ENCODE measurements at regions of chr19 and their contacts with region 1.

Region 1: DNA sequence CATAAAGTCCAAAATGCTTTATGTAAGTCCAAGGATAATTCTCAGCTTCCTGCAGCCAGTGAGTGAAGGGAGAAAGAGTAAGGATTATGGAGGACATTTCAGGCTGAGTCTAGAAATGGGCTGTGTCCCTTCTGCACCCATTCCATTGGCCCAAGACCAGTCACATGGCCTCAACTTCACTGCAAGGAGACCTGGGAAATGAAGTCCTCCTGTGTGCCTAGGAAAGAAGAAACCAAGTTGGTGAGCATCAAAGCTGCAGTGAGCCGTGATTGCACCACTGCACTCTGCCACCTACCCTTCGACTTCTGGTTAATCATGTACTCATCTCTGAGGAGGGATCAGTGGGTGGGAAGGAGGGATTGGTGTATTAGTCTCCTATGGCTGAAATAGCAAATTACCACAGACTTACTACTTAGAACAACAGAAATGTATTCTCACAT is 3.6 kb upstream of the CD37 start:
- DNase-seq: no peak
- ATAC-seq: peak; percentile 44
- H3K4me3 Mint-ChIP-seq: peak overlapping the region; percentile 73
- H3K27ac Mint-ChIP-seq: peak overlapping the region; percentile 100
- H3K4me1 Mint-ChIP-seq: peaks cover 95% of the 10 kb centered on the region
- H3K27me3 Mint-ChIP-seq: no peaks in the 10 kb centered on the region
- CTCF ChIP-seq: no peak

Region 2: DNA sequence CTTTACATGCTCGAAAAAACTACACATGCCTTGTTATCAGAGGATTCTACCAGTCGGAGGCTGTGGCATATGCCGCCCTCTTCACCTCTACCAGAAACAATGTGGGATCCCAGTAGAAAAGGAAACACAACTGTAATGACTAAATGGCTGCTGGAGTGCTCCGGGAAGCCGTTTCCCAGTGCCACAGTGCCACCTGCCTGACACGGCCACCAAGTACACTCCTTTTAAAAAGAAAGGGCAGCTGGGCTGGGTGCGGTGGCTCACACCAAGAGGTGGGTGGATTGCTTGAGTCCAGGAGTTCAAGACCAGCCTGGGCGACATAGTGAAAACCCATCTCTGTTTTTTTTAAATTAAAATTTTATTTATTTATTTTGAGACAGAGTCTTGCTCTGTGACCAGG is 106.8 kb before region 1 on chr19:
- CTCF ChIA-PET with region 1: no interaction called
- POLR2A ChIA-PET with region 1: interaction called, 5 read pairs
- intact Hi-C with region 1: loop called (anchors 5 kb)
- DNase-seq: no peak
- ATAC-seq: peak; percentile 54
- H3K4me3 Mint-ChIP-seq: no peak overlapping the region
- H3K27ac Mint-ChIP-seq: no peak overlapping the region
- H3K4me1 Mint-ChIP-seq: peaks cover 6% of the 10 kb centered on the region
- H3K27me3 Mint-ChIP-seq: peaks cover 6% of the 10 kb centered on the region
- CTCF ChIP-seq: no peak

Region 3: DNA sequence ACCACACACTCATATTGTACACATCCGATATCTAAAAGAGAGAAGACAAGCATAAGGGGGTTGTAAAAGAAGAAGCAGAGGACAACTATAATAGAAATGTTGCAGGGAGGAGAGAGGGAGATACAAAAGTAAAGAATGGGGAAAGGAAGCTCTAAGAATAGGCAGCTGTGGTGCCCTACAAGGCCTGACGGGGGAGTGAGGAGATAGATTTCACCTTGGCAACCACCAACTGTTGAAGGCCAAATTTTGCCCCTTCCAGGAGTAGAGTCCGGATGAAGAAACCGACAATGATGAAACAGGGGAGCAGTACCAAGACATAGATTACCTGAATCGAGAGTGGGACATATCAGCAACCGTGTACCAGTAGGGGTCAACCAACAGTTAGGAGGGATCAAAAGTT is 22.5 kb before region 1 on chr19:
- CTCF ChIA-PET with region 1: interaction called, 4 read pairs
- POLR2A ChIA-PET with region 1: interaction called, 23 read pairs
- intact Hi-C with region 1: loop called (anchors 1 kb)
- DNase-seq: no peak
- ATAC-seq: peak; percentile 37
- H3K4me3 Mint-ChIP-seq: no peak overlapping the region
- H3K27ac Mint-ChIP-seq: peak overlapping the region; percentile 74
- H3K4me1 Mint-ChIP-seq: peaks cover 47% of the 10 kb centered on the region
- H3K27me3 Mint-ChIP-seq: no peaks in the 10 kb centered on the region
- CTCF ChIP-seq: no peak

Region 4: DNA sequence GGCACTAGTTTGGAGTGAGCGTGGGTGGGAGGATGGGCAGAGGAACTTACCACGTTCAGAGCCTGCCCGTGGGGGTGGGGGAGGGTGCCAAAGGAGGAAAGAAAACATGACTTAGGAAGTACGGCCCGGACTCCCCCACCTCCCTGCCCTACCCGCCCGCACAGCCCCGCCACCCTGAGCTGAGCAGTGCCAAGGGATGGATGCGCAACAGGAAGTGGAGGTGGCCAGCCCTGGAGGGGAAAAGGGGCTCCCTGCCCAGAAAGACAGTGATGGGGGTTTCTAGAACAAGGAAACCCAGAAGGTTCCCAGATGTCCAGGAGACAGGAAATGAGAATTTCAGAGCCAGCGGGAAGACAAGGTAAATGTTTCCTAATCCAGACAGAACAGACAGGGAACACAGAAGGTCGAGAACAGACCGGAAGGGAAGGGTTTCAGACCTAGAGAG is 24.3 kb after region 1 on chr19:
- CTCF ChIA-PET with region 1: no interaction called
- POLR2A ChIA-PET with region 1: interaction called, 120 read pairs
- intact Hi-C with region 1: no loop called
- DNase-seq: no peak
- ATAC-seq: no peak
- H3K4me3 Mint-ChIP-seq: peak overlapping the region; percentile 73
- H3K27ac Mint-ChIP-seq: peak overlapping the region; percentile 80
- H3K4me1 Mint-ChIP-seq: peaks cover 56% of the 10 kb centered on the region
- H3K27me3 Mint-ChIP-seq: no peaks in the 10 kb centered on the region
- CTCF ChIP-seq: no peak

Region 5: DNA sequence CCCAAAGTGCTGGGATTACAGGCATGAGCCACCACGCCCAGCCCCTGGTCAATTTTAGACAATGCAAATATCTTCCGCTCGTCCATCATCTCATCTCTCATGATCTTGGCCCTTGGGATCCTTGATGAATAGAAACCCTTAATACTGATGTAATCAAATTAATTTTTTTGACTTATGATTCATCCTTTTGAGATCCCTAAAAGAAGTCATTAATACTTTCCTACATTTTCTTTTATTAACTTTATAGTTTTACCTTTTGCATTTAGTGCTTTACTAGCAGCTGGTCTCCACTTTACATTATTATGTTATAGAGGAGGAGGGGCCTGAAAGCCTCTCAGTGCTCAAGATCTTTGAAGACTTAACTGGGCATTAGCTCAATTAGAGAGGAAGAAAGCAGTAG is 48.8 kb after region 1 on chr19:
- CTCF ChIA-PET with region 1: no interaction called
- POLR2A ChIA-PET with region 1: interaction called, 14 read pairs
- intact Hi-C with region 1: no loop called
- DNase-seq: no peak
- ATAC-seq: no peak
- H3K4me3 Mint-ChIP-seq: no peak overlapping the region
- H3K27ac Mint-ChIP-seq: no peak overlapping the region
- H3K4me1 Mint-ChIP-seq: no peaks in the 10 kb centered on the region
- H3K27me3 Mint-ChIP-seq: no peaks in the 10 kb centered on the region
- CTCF ChIP-seq: no peak

Region 6: GRCh38 chr19:49889687-49890348 is 558.2 kb after region 1 on chr19:
- CTCF ChIA-PET with region 1: no interaction called
- POLR2A ChIA-PET with region 1: no interaction called
- intact Hi-C with region 1: loop called (anchors 10 kb)
- DNase-seq: no peak
- ATAC-seq: peak; percentile 66
- H3K4me3 Mint-ChIP-seq: peak overlapping the region; percentile 82
- H3K27ac Mint-ChIP-seq: peak overlapping the region; percentile 7
- H3K4me1 Mint-ChIP-seq: peaks cover 41% of the 10 kb centered on the region
- H3K27me3 Mint-ChIP-seq: no peaks in the 10 kb centered on the region
- CTCF ChIP-seq: peak; percentile 39